K562 (cell line): ENCODE measurements at regions of chr17 and their contacts with region 1.

Region 1: GRCh38 chr17:57009737-57010445 is 32.0 kb downstream of the SCPEP1 start:
- DNase-seq: peak; percentile 54 to 73 (median 62)
- ATAC-seq: peak; percentile 93
- H3K4me3 ChIP-seq: no peak overlapping the region
- H3K27ac ChIP-seq: no peak overlapping the region
- H3K4me1 ChIP-seq: peaks cover 0 to 13% of the 10 kb centered on the region in 2 experiments; a peak in 3 of 5 replicates
- H3K27me3 ChIP-seq: peaks cover 2 to 4% of the 10 kb centered on the region in 2 experiments; a peak in 2 of 5 replicates
- CTCF ChIP-seq: peak; percentile 78 to 83 (median 81)
- EP300 ChIP-seq: no peak
- POLR2A ChIP-seq: no peak
- RAD21 ChIP-seq: peak; percentile 46 to 84

Region 2: GRCh38 chr17:56960596-56961538 is 49.0 kb before region 1 on chr17 and contains the start of gene COIL:
- CTCF ChIA-PET with region 1: no interaction called
- POLR2A ChIA-PET with region 1: no interaction called
- in situ Hi-C with region 1: no loop called
- intact Hi-C with region 1: loop called (anchors 5 kb)
- DNase-seq: peak; percentile 91 to 96 (median 94)
- ATAC-seq: peak; percentile 96
- H3K4me3 ChIP-seq: peak within 1 kb of the TSS; percentile 70
- H3K27ac ChIP-seq: peak within 1 kb of the TSS; percentile 92
- H3K4me1 ChIP-seq: peaks cover 8 to 10% of the 10 kb centered on the region in 2 experiments; a peak in 4 of 5 replicates
- H3K27me3 ChIP-seq: no peaks in the 10 kb centered on the region
- CTCF ChIP-seq: peak; percentile 95 to 99 (median 96)
- EP300 ChIP-seq: no peak; the same call in 1 of the 2 replicates
- POLR2A ChIP-seq: peak; percentile 93
- RAD21 ChIP-seq: peak; percentile 71 to 78
- polyA plus RNA-seq, gene COIL: 23.9 to 30.8 TPM

Region 3: GRCh38 chr17:57051886-57052361 is 42.0 kb after region 1 on chr17:
- CTCF ChIA-PET with region 1: no interaction called
- POLR2A ChIA-PET with region 1: interaction called, 3 read pairs
- in situ Hi-C with region 1: no loop called
- intact Hi-C with region 1: loop called (anchors 5 kb)
- DNase-seq: no peak
- ATAC-seq: no peak
- H3K4me3 ChIP-seq: no peak overlapping the region
- H3K27ac ChIP-seq: no peak overlapping the region
- H3K4me1 ChIP-seq: peaks cover 6 to 15% of the 10 kb centered on the region in 2 experiments; a peak in 3 of 5 replicates
- H3K27me3 ChIP-seq: no peaks in the 10 kb centered on the region
- CTCF ChIP-seq: no peak
- EP300 ChIP-seq: no peak
- POLR2A ChIP-seq: no peak
- RAD21 ChIP-seq: no peak

Region 4: DNA sequence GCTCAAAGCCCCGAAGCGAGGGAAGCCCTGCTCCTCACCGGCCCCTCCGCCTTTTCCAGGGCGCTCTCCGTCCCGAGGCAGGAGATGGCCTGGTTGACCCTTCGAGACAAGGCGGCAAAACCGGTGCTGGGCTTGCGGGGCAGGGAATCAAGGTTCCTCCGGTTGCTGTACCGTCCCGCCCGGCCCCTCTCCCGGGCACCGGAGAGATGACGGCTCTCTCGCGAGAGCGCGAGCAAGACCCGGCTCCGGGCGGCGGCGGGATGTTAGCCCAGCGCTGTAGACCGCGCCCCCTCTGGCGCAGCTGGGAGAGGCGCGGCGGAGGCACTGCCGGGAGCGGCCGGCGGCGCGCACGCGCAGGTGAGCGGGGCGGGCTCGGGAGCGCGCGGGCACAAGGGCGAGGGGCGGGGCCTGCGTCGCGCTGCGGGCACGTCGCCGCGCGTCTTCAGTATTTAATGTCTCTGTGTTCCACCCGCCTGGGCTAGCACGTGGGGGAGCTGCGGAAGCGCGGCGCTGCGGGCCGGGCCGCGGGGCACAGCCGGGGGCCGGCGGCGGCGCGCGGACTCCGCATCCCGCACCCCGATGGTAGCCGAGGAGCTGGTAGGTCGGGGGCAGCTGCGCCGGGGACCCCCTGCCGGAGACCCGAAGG is 75.0 kb after region 1 on chr17 and contains the start of gene AKAP1:
- CTCF ChIA-PET with region 1: no interaction called
- POLR2A ChIA-PET with region 1: no interaction called
- in situ Hi-C with region 1: no loop called
- intact Hi-C with region 1: loop called (anchors 5 kb)
- DNase-seq: peak; percentile 97 to 99 (median 98)
- ATAC-seq: peak; percentile 94
- H3K4me3 ChIP-seq: peak within 1 kb of the TSS; percentile 61
- H3K27ac ChIP-seq: peak within 1 kb of the TSS; percentile 83
- H3K4me1 ChIP-seq: peaks cover 24 to 36% of the 10 kb centered on the region in 2 experiments; a peak in 4 of 5 replicates
- H3K27me3 ChIP-seq: no peaks in the 10 kb centered on the region
- CTCF ChIP-seq: peak in 2 of 3 experiments; percentile 56 to 60; a peak in 4 of 6 replicates
- EP300 ChIP-seq: no peak
- POLR2A ChIP-seq: peak; percentile 95
- RAD21 ChIP-seq: peak; percentile 27 to 32
- polyA plus RNA-seq, gene AKAP1: 12.9 to 13.2 TPM

Region 5: DNA sequence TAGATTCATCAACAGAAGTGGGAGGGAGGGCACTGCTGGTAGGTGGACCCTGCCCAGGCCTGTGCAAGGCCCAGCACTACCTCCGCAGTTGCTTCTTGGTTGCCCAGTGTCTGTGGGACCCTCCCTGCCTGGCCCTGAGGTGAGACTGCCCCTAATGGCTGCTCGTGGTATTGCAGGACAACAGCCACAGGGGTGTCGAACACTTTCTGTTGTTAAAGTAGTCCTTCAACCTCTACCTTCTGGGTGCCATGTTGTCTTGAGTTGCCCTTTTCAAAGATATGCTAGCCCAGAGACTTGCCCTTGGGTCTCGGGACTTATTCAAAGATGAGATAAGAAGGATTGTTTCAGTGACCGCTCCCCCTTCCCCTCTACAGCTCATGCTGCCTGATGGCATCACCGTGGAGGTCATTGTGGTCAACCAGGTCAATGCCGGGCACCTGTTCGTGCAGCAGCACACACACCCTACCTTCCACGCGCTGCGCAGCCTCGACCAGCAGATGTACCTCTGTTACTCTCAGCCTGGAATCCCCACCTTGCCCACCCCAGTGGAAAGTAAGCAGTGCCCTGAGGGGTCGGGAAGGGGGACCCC is 104.3 kb after region 1 on chr17:
- CTCF ChIA-PET with region 1: interaction called, 7 read pairs
- POLR2A ChIA-PET with region 1: interaction called, 4 read pairs
- in situ Hi-C with region 1: loop called (anchors 5 kb)
- intact Hi-C with region 1: loop called (anchors 5 kb)
- DNase-seq: peak; percentile 73 to 78 (median 76)
- ATAC-seq: peak; percentile 90
- H3K4me3 ChIP-seq: no peak overlapping the region
- H3K27ac ChIP-seq: no peak overlapping the region; the same call in 2 of the 3 replicates
- H3K4me1 ChIP-seq: peaks cover 7 to 20% of the 10 kb centered on the region in 2 experiments
- H3K27me3 ChIP-seq: no peaks in the 10 kb centered on the region
- CTCF ChIP-seq: peak; percentile 84 to 96 (median 86)
- EP300 ChIP-seq: no peak
- POLR2A ChIP-seq: no peak
- RAD21 ChIP-seq: peak; percentile 43 to 76; a peak in 2 of 4 replicates